Mammary epithelial cell (primary cell): ENCODE measurements at regions of chr6 and their contacts with region 1.

Region 1: GRCh38 chr6:129598244-129599187 is 111.5 kb downstream of the ARHGAP18 start:
- DNase-seq: peak; percentile 53
- H3K4me3 ChIP-seq: no peak overlapping the region
- H3K27ac ChIP-seq: no peak overlapping the region
- H3K4me1 ChIP-seq: peaks cover 6% of the 10 kb centered on the region
- H3K27me3 ChIP-seq: no peaks in the 10 kb centered on the region
- CTCF ChIP-seq: peak; percentile 73 to 90

Region 2: DNA sequence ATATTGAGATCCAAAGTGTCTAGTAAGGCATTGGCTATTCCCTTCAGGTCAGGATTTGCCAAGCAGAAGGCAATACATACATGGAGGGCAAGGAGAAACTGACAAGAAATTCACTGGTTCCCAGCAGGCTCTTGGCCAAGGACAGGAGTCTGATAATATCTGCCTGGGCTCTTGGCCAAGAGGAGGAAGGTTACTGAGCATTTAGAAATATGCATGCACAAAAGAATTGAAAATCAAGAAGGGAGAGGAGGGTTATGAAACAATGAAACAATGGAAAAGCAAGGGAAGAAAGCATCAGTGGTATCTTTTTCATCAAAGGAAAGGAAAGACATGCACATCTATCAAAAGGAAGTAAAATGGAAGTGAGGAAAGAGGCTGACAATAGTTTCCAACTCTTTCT is 69.1 kb after region 1 on chr6:
- CTCF ChIA-PET with region 1: no interaction called
- dilution Hi-C with region 1: loop called (anchors 5 kb)
- in situ Hi-C with region 1: no loop called
- intact Hi-C with region 1: loop called (anchors 1 kb)
- DNase-seq: peak; percentile 57
- H3K4me3 ChIP-seq: no peak overlapping the region
- H3K27ac ChIP-seq: no peak overlapping the region
- H3K4me1 ChIP-seq: peaks cover 21% of the 10 kb centered on the region
- H3K27me3 ChIP-seq: no peaks in the 10 kb centered on the region
- CTCF ChIP-seq: no peak

Region 3: DNA sequence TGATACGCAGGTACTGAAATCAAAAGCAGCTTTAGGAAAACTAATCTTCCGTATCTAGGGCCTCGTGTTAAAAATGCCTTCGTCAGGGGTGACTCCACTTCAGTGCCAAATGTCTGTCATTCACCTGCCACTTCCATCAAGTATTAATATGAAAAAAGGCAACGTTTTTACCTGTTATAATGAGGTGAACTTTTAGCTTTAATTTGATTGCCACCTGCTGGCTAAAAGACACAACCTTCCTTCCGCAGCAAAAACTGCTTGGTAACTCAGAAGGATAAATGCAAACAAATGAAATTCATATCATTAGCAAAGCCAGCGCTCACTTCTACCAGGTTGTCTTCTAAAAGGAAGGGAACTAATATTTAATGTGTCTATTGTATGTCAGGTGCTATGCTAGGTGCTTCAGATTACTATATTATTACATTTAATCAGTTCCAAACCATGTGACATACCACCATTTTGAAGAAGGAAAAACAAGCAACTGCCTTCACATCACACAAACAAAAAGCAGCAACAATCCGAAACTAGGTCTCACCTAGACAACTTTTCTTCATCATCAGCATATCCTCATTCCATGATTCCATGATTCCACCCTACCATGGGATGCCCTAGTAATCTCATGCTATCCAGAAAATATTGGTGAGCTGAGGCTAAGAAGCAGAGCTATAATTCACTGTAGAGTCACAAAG is 132.1 kb after region 1 on chr6:
- CTCF ChIA-PET with region 1: interaction called, 7 read pairs
- dilution Hi-C with region 1: no loop called
- in situ Hi-C with region 1: loop called in 1 of 2 experiments (anchors 10 kb)
- intact Hi-C with region 1: loop called (anchors 1 kb)
- DNase-seq: no peak
- H3K4me3 ChIP-seq: no peak overlapping the region
- H3K27ac ChIP-seq: peak overlapping the region; percentile 9
- H3K4me1 ChIP-seq: peaks cover 20% of the 10 kb centered on the region
- H3K27me3 ChIP-seq: no peaks in the 10 kb centered on the region
- CTCF ChIP-seq: peak; percentile 47 to 63

Region 4: DNA sequence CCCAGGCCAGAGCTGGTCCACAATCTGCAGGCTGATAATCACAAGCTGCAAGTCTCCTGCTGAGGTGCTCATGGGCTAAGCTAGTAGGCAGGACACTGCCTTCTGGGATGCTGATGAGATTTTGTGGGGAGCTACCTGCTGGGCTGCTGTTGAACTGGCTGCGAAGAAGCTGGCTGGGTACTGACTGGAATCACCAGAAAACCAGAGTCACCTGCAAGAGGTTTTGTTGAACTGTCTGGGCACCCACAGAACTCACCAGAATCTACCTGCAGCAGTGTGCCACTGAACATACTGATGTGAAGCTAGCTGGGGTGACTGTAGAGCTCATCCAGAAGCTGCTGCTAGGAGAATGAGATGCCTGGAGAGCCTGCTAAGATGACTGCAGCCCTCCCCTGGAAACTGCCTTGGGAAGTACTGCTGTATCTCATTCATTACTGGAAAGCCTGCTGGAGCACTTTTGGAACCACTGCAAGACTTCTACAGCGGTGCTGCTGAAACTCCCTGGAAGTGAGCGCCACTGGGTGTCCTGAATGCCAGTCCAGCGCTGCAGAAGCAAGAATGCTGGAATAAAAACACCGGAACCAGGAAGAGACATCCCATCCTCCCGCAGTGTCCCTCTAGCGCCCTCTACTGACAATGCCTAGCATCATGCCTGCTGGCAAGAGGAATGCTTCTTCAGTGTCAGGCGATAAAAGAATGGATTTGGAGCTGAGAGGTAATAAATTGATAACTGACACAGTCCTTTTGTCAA is 176.4 kb after region 1 on chr6:
- CTCF ChIA-PET with region 1: no interaction called
- dilution Hi-C with region 1: no loop called
- in situ Hi-C with region 1: no loop called
- intact Hi-C with region 1: loop called (anchors 1 kb)
- DNase-seq: peak; percentile 53
- H3K4me3 ChIP-seq: no peak overlapping the region
- H3K27ac ChIP-seq: no peak overlapping the region
- H3K4me1 ChIP-seq: no peaks in the 10 kb centered on the region
- H3K27me3 ChIP-seq: no peaks in the 10 kb centered on the region
- CTCF ChIP-seq: peak; percentile 99

Region 5: DNA sequence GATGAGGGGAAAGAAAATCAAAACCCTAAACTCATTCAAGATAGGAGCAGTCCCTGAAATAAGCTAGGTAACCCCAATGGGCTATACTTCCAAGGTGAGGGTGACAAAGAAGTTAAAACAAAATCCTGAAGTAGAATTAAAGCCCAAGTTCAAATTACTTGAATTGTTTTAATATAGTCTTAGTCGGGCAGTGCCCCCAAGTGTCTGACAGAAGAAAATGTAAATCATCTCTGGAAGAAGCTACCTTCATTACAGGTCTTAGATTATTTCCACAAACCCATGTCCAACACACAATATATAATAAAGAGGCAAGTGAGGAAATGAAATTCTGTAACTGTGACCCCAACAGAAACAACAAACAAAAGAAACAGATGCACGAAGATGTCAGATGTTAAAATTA is 383.1 kb after region 1 on chr6:
- CTCF ChIA-PET with region 1: no interaction called
- dilution Hi-C with region 1: no loop called
- in situ Hi-C with region 1: no loop called
- intact Hi-C with region 1: loop called (anchors 1 kb)
- DNase-seq: peak; percentile 2
- H3K4me3 ChIP-seq: no peak overlapping the region
- H3K27ac ChIP-seq: no peak overlapping the region
- H3K4me1 ChIP-seq: no peaks in the 10 kb centered on the region
- H3K27me3 ChIP-seq: no peaks in the 10 kb centered on the region
- CTCF ChIP-seq: peak; percentile 29 to 50

Region 6: GRCh38 chr6:130148181-130148580 is 549.7 kb after region 1 on chr6:
- CTCF ChIA-PET with region 1: no interaction called
- dilution Hi-C with region 1: no loop called
- in situ Hi-C with region 1: no loop called
- intact Hi-C with region 1: no loop called
- DNase-seq: no peak
- H3K4me3 ChIP-seq: no peak overlapping the region
- H3K27ac ChIP-seq: no peak overlapping the region
- H3K4me1 ChIP-seq: peaks cover 7% of the 10 kb centered on the region
- H3K27me3 ChIP-seq: no peaks in the 10 kb centered on the region
- CTCF ChIP-seq: peak; percentile 5 to 8

Region 7: GRCh38 chr6:130466052-130467048 is 867.8 kb after region 1 on chr6:
- CTCF ChIA-PET with region 1: no interaction called
- dilution Hi-C with region 1: no loop called
- in situ Hi-C with region 1: no loop called
- intact Hi-C with region 1: no loop called
- DNase-seq: peak; percentile 22
- H3K4me3 ChIP-seq: no peak overlapping the region
- H3K27ac ChIP-seq: no peak overlapping the region
- H3K4me1 ChIP-seq: peaks cover 4% of the 10 kb centered on the region
- H3K27me3 ChIP-seq: no peaks in the 10 kb centered on the region
- CTCF ChIP-seq: no peak